Dendritic cell treated with granulocyte-macrophage colony-stimulating factor and Interleukin-4, amounts not matched to agents 40 ng/mL and 50 ng/mL, for 4 days (primary cell): ENCODE measurements at regions of chr7 and their contacts with region 1.

Region 1: DNA sequence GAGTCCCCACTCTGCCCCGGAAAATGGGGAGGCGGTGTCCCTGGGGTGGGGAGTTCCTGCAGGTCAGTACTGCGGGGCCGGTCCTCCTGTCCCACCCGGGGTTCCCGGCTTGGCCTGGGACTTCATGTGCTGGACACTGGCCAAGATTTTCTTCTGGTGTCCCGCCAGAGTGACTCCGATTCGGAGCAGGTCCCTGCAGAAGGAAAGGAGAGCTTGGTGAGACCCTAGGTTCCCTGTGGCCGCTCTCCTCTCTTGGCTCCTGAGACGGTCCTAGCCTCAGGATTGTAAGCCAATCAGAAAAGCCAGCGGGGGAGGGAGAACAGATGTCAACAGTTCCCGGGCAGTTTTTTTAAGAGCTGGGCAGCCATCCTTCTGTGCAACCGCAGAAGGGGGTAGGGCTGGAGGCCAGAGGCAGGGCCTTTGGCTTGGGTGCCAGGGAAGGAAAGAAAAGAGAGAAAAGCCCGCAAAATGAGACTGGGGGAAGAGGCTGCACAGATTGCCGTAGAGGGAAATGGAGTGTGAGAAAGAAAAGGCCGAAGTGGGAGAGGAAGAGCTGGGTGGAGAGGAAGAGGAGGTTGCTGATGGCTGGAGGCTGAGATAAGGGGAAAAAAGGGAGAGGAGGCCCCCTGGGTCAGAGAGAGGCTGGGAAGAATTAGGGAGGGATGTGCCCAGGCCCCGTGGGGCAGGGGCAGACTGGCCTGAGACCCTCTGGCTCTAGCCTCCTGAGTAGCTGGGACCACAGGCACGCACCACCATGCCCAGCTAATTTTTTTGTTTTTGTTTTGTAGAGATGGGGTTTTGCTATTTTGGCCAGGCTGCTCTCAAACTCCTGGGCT is 23.7 kb downstream of the EPHB4 start:
- H3K4me3 Mint-ChIP-seq: peak overlapping the region; percentile 58
- H3K27ac Mint-ChIP-seq: peak overlapping the region; percentile 88
- H3K4me1 Mint-ChIP-seq: peaks cover 48% of the 10 kb centered on the region
- H3K27me3 Mint-ChIP-seq: peaks cover 21% of the 10 kb centered on the region

Region 2: GRCh38 chr7:100753750-100754149 is 49.9 kb before region 1 on chr7:
- intact Hi-C with region 1: no loop called
- H3K4me3 Mint-ChIP-seq: no peak overlapping the region
- H3K27ac Mint-ChIP-seq: no peak overlapping the region
- H3K4me1 Mint-ChIP-seq: no peaks in the 10 kb centered on the region
- H3K27me3 Mint-ChIP-seq: peaks cover 29% of the 10 kb centered on the region

Region 3: DNA sequence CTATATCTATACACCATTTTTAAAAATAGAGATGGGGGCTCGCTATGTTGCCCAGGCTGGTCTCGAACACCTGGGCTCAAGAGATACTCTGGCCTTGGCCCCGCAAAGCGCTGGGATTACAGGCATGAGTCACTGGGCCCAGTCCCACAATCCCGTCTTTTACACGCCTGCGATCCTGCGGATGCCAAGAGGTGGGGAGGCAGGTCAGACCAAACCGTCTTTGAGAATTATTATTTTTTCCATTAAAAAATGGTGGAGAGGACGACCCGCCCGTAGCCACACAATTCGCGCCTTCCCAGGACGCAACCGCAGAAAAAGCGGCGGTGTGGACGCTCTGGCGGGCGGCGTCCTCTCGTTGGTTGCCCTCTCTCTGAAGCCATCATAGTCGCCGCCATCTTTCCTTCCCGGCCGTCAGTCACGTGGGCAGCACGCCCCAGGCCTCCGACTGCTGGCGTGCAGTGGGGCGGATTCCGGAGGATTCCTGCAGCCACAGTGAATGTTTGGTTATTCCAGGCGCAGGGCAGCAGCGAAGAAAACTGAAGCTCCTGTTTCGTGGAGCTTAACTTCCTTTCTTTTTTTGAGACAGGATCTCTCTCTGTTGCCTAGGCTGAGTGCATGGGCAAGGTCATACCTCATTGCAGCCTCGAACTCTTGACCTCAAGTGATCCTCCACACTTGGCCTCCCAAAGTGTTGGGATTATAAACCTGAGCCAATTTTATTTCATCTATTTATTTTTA is 33.7 kb after region 1 on chr7:
- intact Hi-C with region 1: loop called (anchors 5 kb)
- H3K4me3 Mint-ChIP-seq: peak overlapping the region; percentile 58
- H3K27ac Mint-ChIP-seq: peak overlapping the region; percentile 68
- H3K4me1 Mint-ChIP-seq: peaks cover 18% of the 10 kb centered on the region
- H3K27me3 Mint-ChIP-seq: peaks cover 8% of the 10 kb centered on the region